ENCODE measurements at regions of chr18 and their contacts with region 1.

Region 1: GRCh38 chr18:65922103-65922502 is 171.3 kb downstream of the CDH7 start:
- DNase-seq: no peak
- ATAC-seq: no peak
- H3K4me3 Mint-ChIP-seq: no peak overlapping the region
- H3K27ac Mint-ChIP-seq: no peak overlapping the region
- H3K4me1 Mint-ChIP-seq: 0 out of 2 replicates have a peak, but pooled peaks cover 2% of the 10 kb centered on the region
- H3K27me3 Mint-ChIP-seq: peaks cover 48% of the 10 kb centered on the region
- CTCF ChIP-seq: no peak

Region 2: DNA sequence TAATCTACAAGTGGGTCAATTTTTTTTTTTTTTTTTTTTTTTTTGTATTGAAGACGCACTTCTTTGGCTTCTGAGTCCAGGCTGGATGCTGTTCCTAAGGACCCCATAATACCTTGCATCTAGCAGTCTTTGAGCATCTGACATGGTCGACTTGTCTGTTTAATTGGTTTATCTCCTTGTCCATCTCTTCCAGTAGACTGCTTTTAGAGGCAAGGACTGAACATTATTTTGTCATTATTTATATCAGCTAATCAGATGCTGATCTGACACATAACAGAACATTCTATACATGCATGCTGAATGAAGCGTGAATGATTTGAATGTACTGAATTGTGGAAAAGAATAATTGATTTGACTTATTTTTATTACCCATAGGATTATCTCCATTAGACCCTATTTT is 52.6 kb before region 1 on chr18:
- CTCF ChIA-PET with region 1: no interaction called
- POLR2A ChIA-PET with region 1: interaction called, 13 read pairs
- DNase-seq: no peak
- ATAC-seq: no peak
- H3K4me3 Mint-ChIP-seq: no peak overlapping the region
- H3K27ac Mint-ChIP-seq: no peak overlapping the region
- H3K4me1 Mint-ChIP-seq: no peaks in the 10 kb centered on the region
- H3K27me3 Mint-ChIP-seq: no peaks in the 10 kb centered on the region
- CTCF ChIP-seq: no peak

Measured in WTC11 (cell line).